ENCODE measurements at regions of chr14 and their contacts with region 1.

Region 1: DNA sequence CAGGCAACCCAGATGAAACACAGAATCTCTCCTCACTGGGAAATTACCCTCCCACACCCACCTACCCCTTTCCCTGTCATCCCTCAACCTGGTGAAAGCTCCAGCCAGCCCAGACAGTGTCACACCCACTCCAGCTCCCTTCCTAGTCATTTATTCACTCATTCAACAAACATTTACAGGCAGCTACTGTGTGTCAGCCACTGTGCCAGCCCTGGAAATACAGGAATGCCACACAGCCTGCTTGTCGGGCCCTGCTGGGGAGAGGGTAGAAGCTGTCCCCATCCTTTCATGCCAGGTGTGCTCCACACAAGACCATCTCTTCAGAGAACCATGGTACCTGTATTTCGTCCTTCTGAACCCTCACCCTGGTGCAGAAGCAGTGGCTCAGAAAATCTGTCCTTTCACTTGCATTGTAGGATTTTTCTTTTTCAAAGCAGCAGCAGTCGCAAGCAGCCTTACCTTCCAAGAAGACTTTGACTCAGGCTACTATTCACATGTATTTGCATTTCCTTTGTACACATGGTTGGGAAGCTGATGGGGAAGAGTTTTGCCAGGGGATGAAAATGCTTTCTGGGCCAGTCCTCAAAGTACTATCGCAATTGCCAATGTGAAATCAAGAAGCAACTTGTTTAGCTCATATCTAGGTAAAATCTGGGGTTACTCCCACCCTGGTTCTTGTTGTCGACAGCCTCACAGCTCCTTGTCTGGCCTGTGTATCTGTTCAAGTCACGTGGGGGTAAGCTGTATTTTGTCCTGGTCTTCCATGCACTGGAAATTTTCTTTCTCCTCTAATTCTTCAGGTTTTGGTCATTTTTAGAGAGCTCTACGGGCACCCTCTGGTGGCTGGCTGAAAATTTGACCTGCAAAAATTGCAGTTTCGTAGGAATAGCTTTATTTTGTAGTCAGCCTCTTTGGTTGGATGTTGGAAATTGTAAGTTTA is 147.4 kb upstream of the EGLN3 start:
- DNase-seq: no peak

Region 2: GRCh38 chr14:33839193-33840076 is 258.9 kb before region 1 on chr14:
- intact Hi-C with region 1: loop called in 1 of 2 experiments (anchors 5 kb)
- DNase-seq: no peak

Region 3: GRCh38 chr14:33848706-33849454 is 249.4 kb before region 1 on chr14:
- intact Hi-C with region 1: loop called (anchors 5 kb)
- DNase-seq: peak; percentile 77

Region 4: GRCh38 chr14:33943096-33943884 is 155.0 kb before region 1 on chr14:
- intact Hi-C with region 1: loop called in 1 of 2 experiments (anchors 10 kb)
- DNase-seq: no peak

Region 5: DNA sequence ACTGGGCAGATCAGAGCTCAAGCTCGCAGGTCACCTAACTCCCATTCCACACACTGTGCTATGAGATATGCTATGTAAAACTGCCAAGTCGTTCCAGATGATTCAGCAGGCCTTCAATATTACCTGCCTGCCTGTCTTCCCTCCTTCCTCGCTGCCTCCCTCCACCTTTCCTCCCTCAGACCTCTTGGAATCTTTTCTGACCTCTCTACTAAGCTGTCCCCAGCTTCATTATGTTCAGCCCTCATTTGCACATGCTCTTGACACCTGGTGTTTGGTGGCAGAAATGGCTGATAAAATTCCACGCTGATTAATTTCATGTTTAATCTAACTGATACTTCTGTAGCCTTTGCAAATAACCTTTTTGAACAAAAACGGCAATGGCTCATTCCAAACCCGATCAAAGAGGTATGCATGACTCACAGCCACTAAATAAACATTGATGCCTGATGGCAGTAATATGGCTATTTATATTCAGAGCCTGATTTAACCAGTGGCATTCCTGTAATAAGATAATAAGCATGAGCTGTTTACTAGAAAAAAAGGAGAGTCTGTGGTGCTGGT is 16.7 kb before region 1 on chr14:
- intact Hi-C with region 1: no loop called
- DNase-seq: no peak

Region 6: DNA sequence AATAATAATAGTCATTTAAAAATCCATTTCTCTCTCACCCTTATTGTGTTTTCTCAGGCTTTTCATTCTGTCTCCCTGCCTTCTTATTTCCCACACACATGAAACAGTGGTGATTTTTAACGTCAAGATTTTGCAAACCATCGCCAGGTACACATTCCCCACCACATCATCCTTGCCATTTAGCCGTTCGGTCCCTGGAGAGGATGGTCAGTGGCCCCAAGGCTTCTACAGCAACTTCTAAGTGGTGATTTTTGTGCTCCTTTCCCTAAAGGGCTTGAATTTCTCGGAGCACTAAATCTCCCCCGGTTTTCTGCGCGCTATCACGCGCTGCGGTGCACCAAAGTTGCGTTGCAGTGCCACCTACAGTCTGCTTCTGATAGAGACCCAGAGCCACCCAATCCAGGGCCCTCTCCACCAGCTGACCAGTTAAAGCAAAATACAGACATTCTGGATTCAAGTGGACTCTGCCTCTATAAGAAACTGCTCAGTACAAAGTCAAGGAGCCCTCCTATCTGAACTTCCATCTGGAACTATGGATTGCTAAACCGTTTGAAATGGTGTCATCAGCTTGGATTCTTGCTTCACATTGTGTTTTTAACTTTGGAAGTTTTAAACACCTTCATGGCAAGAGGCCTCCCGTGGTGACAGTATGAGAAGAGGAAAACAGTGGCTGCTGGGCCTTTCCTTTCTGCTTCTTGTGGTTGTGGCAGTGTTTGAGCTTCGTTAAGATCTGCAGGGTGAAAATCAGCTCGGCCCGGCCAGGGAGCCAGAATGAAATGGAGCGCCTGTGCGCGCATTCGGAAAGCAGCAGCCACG is 129.7 kb after region 1 on chr14:
- intact Hi-C with region 1: loop called in 1 of 2 experiments (anchors 1 kb)
- DNase-seq: peak; percentile 81

Measured in posterior vena cava (tissue), 2 donors.